HepG2 (cell line): ENCODE measurements at regions of chr2 and their contacts with region 1.

Region 1: GRCh38 chr2:46364797-46365457 is 67.7 kb downstream of the EPAS1 start:
- DNase-seq: peak; percentile 57
- ATAC-seq: peak; percentile 48
- H3K4me3 ChIP-seq: no peak overlapping the region
- H3K27ac ChIP-seq: no peak overlapping the region
- H3K4me1 ChIP-seq: no peaks in the 10 kb centered on the region
- H3K27me3 ChIP-seq: no peaks in the 10 kb centered on the region
- CTCF ChIP-seq: peak; percentile 83
- EP300 ChIP-seq: no peak
- POLR2A ChIP-seq: no peak
- RAD21 ChIP-seq: peak; percentile 75

Region 2: DNA sequence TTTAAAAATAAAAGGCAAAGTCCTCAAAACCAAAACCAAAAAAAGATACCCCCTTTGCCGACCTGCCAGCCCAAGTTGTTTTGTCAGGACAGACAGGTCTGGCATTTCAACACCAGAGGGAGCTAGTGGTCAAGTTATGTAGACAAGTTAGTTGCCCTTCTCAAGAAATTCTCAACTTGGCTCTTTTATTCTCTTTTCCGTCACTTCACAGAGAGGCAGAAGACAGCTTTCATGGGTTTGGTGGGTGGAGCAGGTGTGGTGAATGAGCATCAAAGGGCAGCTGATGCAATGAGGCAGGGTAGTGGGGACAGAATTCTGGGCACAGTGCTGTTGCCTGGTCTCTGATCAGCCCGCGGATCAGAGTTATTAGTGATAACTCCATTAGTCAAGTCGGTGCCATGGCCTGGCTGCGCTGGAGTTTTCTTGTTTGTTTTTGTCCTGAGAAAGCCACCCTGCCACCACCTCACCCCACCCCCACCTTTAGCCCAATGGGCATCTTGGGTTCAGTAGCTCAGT is 371.4 kb before region 1 on chr2:
- CTCF ChIA-PET with region 1: interaction called, 12 read pairs
- POLR2A ChIA-PET with region 1: no interaction called
- in situ Hi-C with region 1: loop called (anchors 5 kb)
- intact Hi-C with region 1: loop called (anchors 1 kb)
- DNase-seq: peak; percentile 78
- ATAC-seq: peak; percentile 56
- H3K4me3 ChIP-seq: peak overlapping the region in 2 of 3 experiments; percentile 13 to 59; a peak in 3 of 6 replicates
- H3K27ac ChIP-seq: peak overlapping the region; percentile 72
- H3K4me1 ChIP-seq: peaks cover 36% of the 10 kb centered on the region
- H3K27me3 ChIP-seq: no peaks in the 10 kb centered on the region
- CTCF ChIP-seq: peak; percentile 87
- EP300 ChIP-seq: peak in 1 of 2 experiments; percentile 15; a peak in 1 of 4 replicates
- POLR2A ChIP-seq: no peak
- RAD21 ChIP-seq: peak; percentile 76

Region 3: GRCh38 chr2:46010925-46011490 is 353.9 kb before region 1 on chr2:
- CTCF ChIA-PET with region 1: interaction called, 8 read pairs
- POLR2A ChIA-PET with region 1: no interaction called
- in situ Hi-C with region 1: loop called (anchors 10 kb)
- intact Hi-C with region 1: loop called (anchors 2 kb)
- DNase-seq: peak; percentile 47
- ATAC-seq: peak; percentile 83
- H3K4me3 ChIP-seq: no peak overlapping the region
- H3K27ac ChIP-seq: no peak overlapping the region
- H3K4me1 ChIP-seq: peaks cover 8% of the 10 kb centered on the region; the same call in 1 of the 2 replicates
- H3K27me3 ChIP-seq: no peaks in the 10 kb centered on the region
- CTCF ChIP-seq: peak; percentile 73
- EP300 ChIP-seq: no peak
- POLR2A ChIP-seq: no peak
- RAD21 ChIP-seq: peak; percentile 53

Region 4: DNA sequence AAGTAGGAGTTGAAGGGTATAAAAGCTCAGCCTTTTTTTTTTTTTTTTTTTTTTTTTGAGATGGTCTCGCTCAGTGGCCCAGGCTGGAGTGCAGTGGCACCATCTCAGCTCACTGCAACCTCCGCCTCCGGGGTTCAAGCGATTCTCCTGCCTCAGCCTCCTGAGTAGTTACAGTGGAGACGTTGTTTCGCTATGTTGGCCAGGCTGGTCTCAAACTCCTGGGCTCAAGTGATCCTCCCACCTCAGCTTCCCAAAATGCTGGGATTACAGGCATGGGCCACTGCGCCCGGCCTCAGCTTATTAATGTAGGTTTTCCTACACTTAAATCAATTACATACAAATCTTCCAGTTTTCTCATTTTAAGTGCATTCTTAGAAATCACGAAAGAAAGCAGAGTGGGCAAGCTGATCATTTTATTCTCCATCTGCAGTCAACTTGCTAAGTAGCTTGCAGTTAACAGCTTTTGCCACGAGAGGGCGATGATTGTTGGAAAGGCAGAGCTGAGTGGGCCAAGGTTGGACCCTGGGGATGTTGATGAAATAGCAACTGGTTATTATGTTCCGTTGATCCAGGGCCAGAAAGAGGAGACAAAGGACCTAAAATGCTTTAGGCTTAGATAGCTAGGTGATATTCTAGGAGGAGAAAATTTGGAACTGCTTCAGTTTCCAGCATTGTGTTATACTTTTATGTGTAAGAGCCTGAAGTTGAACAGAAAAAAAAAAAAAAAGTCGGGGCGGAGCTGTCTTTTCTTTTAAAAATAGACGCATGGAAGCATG is 302.1 kb before region 1 on chr2:
- CTCF ChIA-PET with region 1: interaction called, 16 read pairs
- POLR2A ChIA-PET with region 1: no interaction called
- in situ Hi-C with region 1: no loop called
- intact Hi-C with region 1: loop called (anchors 1 kb)
- DNase-seq: peak; percentile 80
- ATAC-seq: peak; percentile 91
- H3K4me3 ChIP-seq: no peak overlapping the region
- H3K27ac ChIP-seq: no peak overlapping the region
- H3K4me1 ChIP-seq: peaks cover 6% of the 10 kb centered on the region; the same call in 1 of the 2 replicates
- H3K27me3 ChIP-seq: no peaks in the 10 kb centered on the region
- CTCF ChIP-seq: peak; percentile 93
- EP300 ChIP-seq: no peak
- POLR2A ChIP-seq: no peak
- RAD21 ChIP-seq: peak; percentile 89